Activated T-helper 1 cell treated with anti-CD3 and anti-CD28 coated beads, Interleukin-12 subunit alpha, Interleukin-12 subunit beta, Interleukin-2, Interleukin-4 antibody, amounts not matched to agents 30 ng/mL and 10 ng/mL and 1 ng/mL, durations not matched to agents 14 hours and 24 hours and 36 hours (primary cell): ENCODE measurements at regions of chr9 and their contacts with region 1.

Region 1: GRCh38 chr9:95167998-95168397 is 149.5 kb downstream of the FANCC start:
- DNase-seq: peak; percentile 47
- H3K4me3 Mint-ChIP-seq: peak overlapping the region; percentile 3
- H3K27ac Mint-ChIP-seq: peak overlapping the region; percentile 61
- H3K4me1 Mint-ChIP-seq: peaks cover 48% of the 10 kb centered on the region
- H3K27me3 Mint-ChIP-seq: no peaks in the 10 kb centered on the region

Region 2: GRCh38 chr9:94681508-94681907 is 486.5 kb before region 1 on chr9:
- intact Hi-C with region 1: loop called (anchors 1 kb)
- DNase-seq: peak; percentile 43
- H3K4me3 Mint-ChIP-seq: no peak overlapping the region
- H3K27ac Mint-ChIP-seq: no peak overlapping the region
- H3K4me1 Mint-ChIP-seq: no peaks in the 10 kb centered on the region
- H3K27me3 Mint-ChIP-seq: peaks cover 27% of the 10 kb centered on the region

Region 3: DNA sequence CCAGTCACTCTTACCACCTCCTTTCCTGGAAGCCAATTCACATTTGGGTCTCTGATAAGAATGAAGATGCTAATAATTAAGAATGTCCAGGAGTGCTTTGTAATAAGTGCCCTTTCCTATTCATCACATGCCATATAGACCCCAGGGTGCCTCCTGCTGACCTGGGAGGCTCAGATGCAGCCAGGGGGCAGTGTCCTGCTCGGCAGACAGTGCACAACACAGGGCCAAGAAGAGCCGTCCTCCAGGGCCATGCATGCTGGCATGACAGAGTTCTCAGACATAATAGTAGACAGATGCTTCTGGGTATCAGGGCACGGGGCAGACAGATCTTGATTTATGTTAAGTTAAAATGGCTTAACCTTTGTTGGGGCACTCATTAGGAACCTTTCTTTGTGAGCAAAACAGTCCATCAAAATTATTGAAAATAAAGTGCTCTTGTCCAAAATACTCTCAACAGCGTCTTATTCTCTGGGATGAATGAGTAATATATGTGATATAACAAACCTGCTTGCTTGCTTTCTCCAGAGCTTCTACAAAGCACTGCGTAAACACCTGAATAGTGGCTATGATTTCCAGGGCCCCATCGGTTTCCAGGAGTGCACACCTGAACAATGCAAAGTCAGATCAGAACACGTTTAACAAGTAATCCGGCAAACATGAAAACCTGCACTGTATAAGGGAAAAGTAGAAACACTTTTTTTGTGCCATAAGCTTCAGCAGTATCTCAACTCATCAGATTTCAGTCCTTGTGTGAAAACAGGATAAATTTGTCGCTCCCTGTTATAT is 43.2 kb before region 1 on chr9:
- intact Hi-C with region 1: no loop called
- DNase-seq: no peak
- H3K4me3 Mint-ChIP-seq: no peak overlapping the region
- H3K27ac Mint-ChIP-seq: no peak overlapping the region
- H3K4me1 Mint-ChIP-seq: no peaks in the 10 kb centered on the region
- H3K27me3 Mint-ChIP-seq: no peaks in the 10 kb centered on the region

Region 4: GRCh38 chr9:95189251-95190098 is 21.5 kb after region 1 on chr9:
- intact Hi-C with region 1: loop called (anchors 1 kb)
- DNase-seq: peak; percentile 49
- H3K4me3 Mint-ChIP-seq: peak overlapping the region; percentile 67
- H3K27ac Mint-ChIP-seq: peak overlapping the region; percentile 83
- H3K4me1 Mint-ChIP-seq: peaks cover 51% of the 10 kb centered on the region
- H3K27me3 Mint-ChIP-seq: no peaks in the 10 kb centered on the region